OCI-LY7 (cell line): ENCODE measurements at regions of chr12 and their contacts with region 1.

Region 1: GRCh38 chr12:7806863-7807487 is 17.8 kb downstream of the NANOG start:
- DNase-seq: peak; percentile 65
- H3K4me3 ChIP-seq: no peak overlapping the region
- H3K27ac ChIP-seq: no peak overlapping the region
- H3K4me1 ChIP-seq: no peaks in the 10 kb centered on the region
- CTCF ChIP-seq: peak; percentile 100

Region 2: GRCh38 chr12:7555752-7556151 is 251.2 kb before region 1 on chr12:
- CTCF ChIA-PET with region 1: no interaction called
- POLR2A ChIA-PET with region 1: interaction called, 10 read pairs
- intact Hi-C with region 1: no loop called
- DNase-seq: no peak
- H3K4me3 ChIP-seq: no peak overlapping the region
- H3K27ac ChIP-seq: no peak overlapping the region
- H3K4me1 ChIP-seq: no peaks in the 10 kb centered on the region
- CTCF ChIP-seq: no peak

Region 3: GRCh38 chr12:7678738-7679137 is 128.2 kb before region 1 on chr12:
- CTCF ChIA-PET with region 1: no interaction called
- POLR2A ChIA-PET with region 1: no interaction called
- intact Hi-C with region 1: loop called (anchors 2 kb)
- DNase-seq: no peak
- H3K4me3 ChIP-seq: no peak overlapping the region
- H3K27ac ChIP-seq: no peak overlapping the region
- H3K4me1 ChIP-seq: peaks cover 8% of the 10 kb centered on the region
- CTCF ChIP-seq: no peak